Tibial artery (tissue), 4 donors: ENCODE measurements at regions of chr15 and their contacts with region 1.

Region 1: DNA sequence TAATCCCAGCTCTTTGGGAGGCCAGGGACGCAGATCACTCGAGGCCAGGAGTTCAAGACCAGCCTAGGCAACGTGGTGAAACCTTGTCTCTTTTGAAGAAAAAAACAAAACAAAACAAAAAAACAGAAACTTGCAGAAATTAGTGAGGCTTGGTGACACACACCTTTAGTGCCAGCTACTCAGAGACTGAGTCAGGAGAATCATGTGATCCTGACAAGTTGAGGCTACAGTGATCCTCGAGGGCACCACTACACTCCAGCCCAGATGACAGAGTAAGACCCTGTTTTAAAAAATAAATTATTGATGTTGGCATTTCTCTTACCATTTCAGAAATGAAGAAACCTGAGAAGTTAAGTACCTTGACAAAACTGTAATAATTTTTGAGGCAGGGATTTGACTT is 44.6 kb upstream of the CCNB2 start:
- DNase-seq: no peak
- H3K4me3 ChIP-seq: no peak overlapping the region
- H3K27ac ChIP-seq: no peak overlapping the region
- H3K4me1 ChIP-seq: no peaks in the 10 kb centered on the region
- H3K27me3 ChIP-seq: no peaks in the 10 kb centered on the region
- CTCF ChIP-seq: no peak

Region 2: GRCh38 chr15:59013246-59013873 is 47.0 kb before region 1 on chr15:
- intact Hi-C with region 1: no loop called
- DNase-seq: no peak
- H3K4me3 ChIP-seq: no peak overlapping the region
- H3K27ac ChIP-seq: no peak overlapping the region
- H3K4me1 ChIP-seq: peaks cover 0 to 12% (median 4%) of the 10 kb centered on the region in 4 donors
- H3K27me3 ChIP-seq: no peaks in the 10 kb centered on the region
- CTCF ChIP-seq: no peak

Region 3: GRCh38 chr15:59039225-59039624 is 21.1 kb before region 1 on chr15:
- intact Hi-C with region 1: loop called (anchors 2 kb)
- DNase-seq: no peak
- H3K4me3 ChIP-seq: no peak overlapping the region
- H3K27ac ChIP-seq: no peak overlapping the region
- H3K4me1 ChIP-seq: peaks cover 0 to 12% (median 6%) of the 10 kb centered on the region in 4 donors
- H3K27me3 ChIP-seq: no peaks in the 10 kb centered on the region
- CTCF ChIP-seq: no peak